ENCODE measurements at regions of chr1 and their contacts with region 1.

Region 1: DNA sequence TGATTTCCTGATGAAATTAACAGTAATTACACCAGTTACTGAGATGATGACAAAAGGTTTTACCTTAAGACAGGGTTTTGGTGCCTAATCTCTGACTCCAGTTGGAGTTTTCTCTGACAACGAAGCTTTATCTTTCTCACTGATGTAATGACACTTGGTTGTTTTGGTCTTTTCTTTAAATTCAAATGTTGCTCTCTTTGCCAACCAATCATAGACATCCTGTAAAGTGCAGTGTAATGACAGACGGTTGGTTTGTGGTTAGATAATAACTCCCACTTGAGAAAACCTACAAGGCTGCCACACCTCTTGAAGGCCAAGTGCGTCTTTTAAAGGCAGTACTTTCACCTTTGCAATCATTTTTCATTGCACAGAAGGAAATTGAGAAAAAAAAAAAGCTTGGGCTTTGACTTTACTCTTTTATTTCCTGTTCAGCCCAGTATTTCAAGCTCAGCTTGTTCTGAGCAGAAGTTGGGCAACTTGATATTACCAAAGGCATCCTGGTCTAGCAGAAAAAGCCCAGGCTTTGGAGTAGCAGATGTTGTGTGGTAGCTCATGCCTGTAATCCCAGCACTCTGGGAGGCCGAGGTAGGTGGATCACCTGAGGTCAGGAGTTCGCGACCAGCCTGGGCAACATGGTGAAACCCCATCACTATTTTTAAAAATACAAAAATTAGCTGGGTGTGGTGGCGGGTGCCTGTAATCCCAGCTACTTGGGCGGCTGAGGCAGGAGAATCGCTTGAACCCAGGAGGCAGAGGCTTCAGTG is 14.9 kb downstream of the PDIK1L start:
- DNase-seq: peak in 1 of 2 donors; percentile 92
- ATAC-seq: peak; percentile 97 to 100 (median 99)
- H3K4me3 ChIP-seq: no peak overlapping the region
- H3K4me3 Mint-ChIP-seq: peak overlapping the region; percentile 61
- H3K27ac ChIP-seq: no peak overlapping the region
- H3K27ac Mint-ChIP-seq: peak overlapping the region; percentile 79 to 82
- H3K4me1 ChIP-seq: peaks cover 15% of the 10 kb centered on the region
- H3K4me1 Mint-ChIP-seq: peaks cover 27% of the 10 kb centered on the region in 2 donors
- H3K27me3 ChIP-seq: peaks cover 34% of the 10 kb centered on the region
- H3K27me3 Mint-ChIP-seq: peaks cover 29 to 47% of the 10 kb centered on the region in 2 donors
- CTCF ChIP-seq: no peak

Region 2: GRCh38 chr1:26111530-26112406 is 14.7 kb before region 1 on chr1 and contains the start of gene PDIK1L:
- intact Hi-C with region 1: loop called (anchors 1 kb)
- DNase-seq: peak; percentile 91 to 98
- ATAC-seq: peak; percentile 85 to 96 (median 88)
- H3K4me3 ChIP-seq: peak within 1 kb of the TSS; percentile 99
- H3K4me3 Mint-ChIP-seq: peak within 1 kb of the TSS; percentile 91
- H3K27ac ChIP-seq: peak within 1 kb of the TSS; percentile 66
- H3K27ac Mint-ChIP-seq: peak within 1 kb of the TSS; percentile 62 to 84
- H3K4me1 ChIP-seq: peaks cover 13% of the 10 kb centered on the region
- H3K4me1 Mint-ChIP-seq: peaks cover 13 to 14% of the 10 kb centered on the region in 2 donors
- H3K27me3 ChIP-seq: no peaks in the 10 kb centered on the region
- H3K27me3 Mint-ChIP-seq: no peaks in the 10 kb centered on the region
- CTCF ChIP-seq: no peak
- total RNA-seq, gene PDIK1L: 3.1 to 8.2 (median 8.1) TPM

Region 3: GRCh38 chr1:26378088-26378878 is 251.8 kb after region 1 on chr1:
- intact Hi-C with region 1: loop called (anchors 1 kb)
- DNase-seq: peak; percentile 85 to 93
- ATAC-seq: peak; percentile 89 to 97 (median 93)
- H3K4me3 ChIP-seq: peak overlapping the region; percentile 0
- H3K4me3 Mint-ChIP-seq: peak overlapping the region; percentile 92
- H3K27ac ChIP-seq: peak overlapping the region; percentile 69
- H3K27ac Mint-ChIP-seq: peak overlapping the region; percentile 82 to 93
- H3K4me1 ChIP-seq: peaks cover 64% of the 10 kb centered on the region
- H3K4me1 Mint-ChIP-seq: peaks cover 62 to 68% of the 10 kb centered on the region in 2 donors
- H3K27me3 ChIP-seq: no peaks in the 10 kb centered on the region
- H3K27me3 Mint-ChIP-seq: peaks cover 6% of the 10 kb centered on the region in 2 donors
- CTCF ChIP-seq: no peak

Measured in natural killer cell (primary cell).